ENCODE measurements at regions of chr6 and their contacts with region 1.

Region 1: DNA sequence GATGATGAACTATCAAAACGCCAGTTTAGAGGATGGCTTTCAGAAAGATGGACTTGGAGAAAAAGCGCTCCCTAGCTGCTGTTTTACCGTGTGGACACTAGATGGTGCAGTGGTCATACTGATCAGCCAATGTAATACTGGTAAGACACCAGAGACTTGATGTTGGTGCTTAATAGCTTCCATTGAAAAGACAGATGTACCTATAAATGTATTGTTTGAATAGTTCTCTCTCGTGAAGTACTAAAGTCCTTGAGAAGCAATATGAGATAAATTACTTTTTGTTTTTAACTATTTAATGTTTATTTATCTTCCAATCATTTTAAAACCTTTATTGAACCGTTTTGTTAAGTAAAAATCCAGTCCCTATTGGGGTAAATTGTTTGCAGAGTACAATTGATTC is 63.9 kb upstream of the FUCA2 start:
- DNase-seq: no peak
- H3K4me3 ChIP-seq: no peak overlapping the region
- CTCF ChIP-seq: peak; percentile 77

Region 2: GRCh38 chr6:143501851-143502250 is 73.6 kb before region 1 on chr6:
- CTCF ChIA-PET with region 1: no interaction called
- POLR2A ChIA-PET with region 1: no interaction called
- DNase-seq: no peak
- H3K4me3 ChIP-seq: no peak overlapping the region
- CTCF ChIP-seq: no peak

Region 3: DNA sequence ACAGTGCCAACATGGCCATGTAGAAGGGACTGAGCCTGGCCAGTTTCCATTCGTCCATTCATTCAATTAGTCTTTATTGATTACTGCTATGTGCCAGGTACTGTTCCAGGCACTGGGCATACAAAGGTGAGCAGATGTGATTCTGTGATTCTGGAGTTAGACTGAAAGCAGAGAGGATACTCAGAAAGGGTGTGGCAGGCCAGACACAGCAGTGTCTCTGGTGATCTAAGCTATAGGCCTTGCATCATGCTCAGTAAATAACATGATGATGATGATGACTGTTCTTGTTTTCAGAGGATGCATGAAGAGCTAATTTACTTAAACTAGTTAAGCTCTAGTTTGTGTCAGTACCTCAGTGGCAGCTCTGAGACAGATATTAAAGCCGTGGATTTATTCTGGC is 32.6 kb before region 1 on chr6:
- CTCF ChIA-PET with region 1: no interaction called
- POLR2A ChIA-PET with region 1: no interaction called
- DNase-seq: no peak
- H3K4me3 ChIP-seq: no peak overlapping the region
- CTCF ChIP-seq: no peak

Region 4: DNA sequence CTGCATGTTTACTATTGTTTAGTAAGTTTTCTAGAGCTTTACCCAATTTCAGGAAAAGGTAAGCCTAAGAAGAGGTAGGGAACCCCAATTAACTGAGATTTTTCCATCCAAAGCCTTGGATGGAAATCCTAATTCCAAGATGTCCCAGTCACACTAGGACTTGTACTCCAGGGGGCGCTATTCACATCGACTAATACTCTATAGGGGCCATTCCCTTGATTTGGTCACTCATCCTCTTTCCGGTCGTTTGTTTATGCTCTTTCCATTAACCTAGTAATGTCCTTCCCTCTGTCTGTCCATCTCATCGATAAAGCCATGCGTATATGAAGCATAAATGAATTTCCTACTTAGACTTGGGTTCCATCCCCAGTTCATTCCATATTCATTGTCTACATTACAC is 16.9 kb after region 1 on chr6:
- CTCF ChIA-PET with region 1: interaction called, 21 read pairs
- POLR2A ChIA-PET with region 1: interaction called, 3 read pairs
- DNase-seq: no peak
- H3K4me3 ChIP-seq: no peak overlapping the region
- CTCF ChIP-seq: no peak

Region 5: GRCh38 chr6:143940011-143940597 is 364.7 kb after region 1 on chr6:
- CTCF ChIA-PET with region 1: interaction called, 14 read pairs
- POLR2A ChIA-PET with region 1: no interaction called
- DNase-seq: no peak
- H3K4me3 ChIP-seq: no peak overlapping the region
- CTCF ChIP-seq: peak; percentile 48

Region 6: GRCh38 chr6:144008120-144008811 is 432.8 kb after region 1 on chr6 and contains the start of gene PLAGL1:
- CTCF ChIA-PET with region 1: interaction called, 243 read pairs
- POLR2A ChIA-PET with region 1: interaction called, 5 read pairs
- DNase-seq: no peak
- H3K4me3 ChIP-seq: peak within 1 kb of the TSS; percentile 60
- CTCF ChIP-seq: no peak

Region 7: DNA sequence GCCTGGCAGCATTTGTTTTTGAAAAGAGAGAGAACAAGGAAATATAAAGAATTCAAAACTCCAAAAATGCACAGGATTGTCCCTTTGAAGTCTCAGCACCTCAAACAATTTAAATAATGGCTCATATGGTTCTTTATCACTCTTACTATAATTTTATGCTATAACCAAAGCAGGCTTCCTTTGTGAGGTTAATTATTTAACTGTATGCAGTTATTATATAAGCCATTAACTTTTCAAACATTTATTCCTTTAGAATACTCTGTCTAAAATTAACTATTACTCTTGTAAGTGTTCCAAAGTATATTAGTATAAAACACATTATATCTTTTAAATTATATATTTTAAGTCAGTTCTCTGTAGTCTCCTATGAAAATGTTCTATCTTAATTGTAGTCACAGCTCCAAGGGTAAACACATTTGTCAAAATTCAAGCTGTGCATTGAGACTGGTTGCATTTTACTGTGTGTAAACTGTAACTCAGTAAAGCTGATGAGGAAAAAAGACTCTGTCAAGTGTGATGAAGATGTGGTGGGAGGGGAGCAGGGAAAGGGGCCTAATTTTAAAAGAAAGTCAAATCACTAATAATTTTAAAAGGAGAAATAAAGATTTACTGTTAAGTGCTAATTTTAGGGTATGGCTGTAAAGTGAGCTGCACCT is 452.6 kb after region 1 on chr6:
- CTCF ChIA-PET with region 1: interaction called, 15 read pairs
- POLR2A ChIA-PET with region 1: no interaction called
- DNase-seq: no peak
- H3K4me3 ChIP-seq: no peak overlapping the region
- CTCF ChIP-seq: no peak